ENCODE measurements at regions of chr14 and their contacts with region 1.

Region 1: GRCh38 chr14:68248481-68249255 is 429.1 kb downstream of the RAD51B start:
- DNase-seq: peak in 5 of 14 experiments; percentile 1 to 79 (median 69)
- ATAC-seq: peak; percentile 83
- H3K4me3 ChIP-seq: no peak overlapping the region
- H3K4me3 Mint-ChIP-seq: no peak overlapping the region
- H3K27ac ChIP-seq: no peak overlapping the region
- H3K27ac Mint-ChIP-seq: peak overlapping the region; percentile 67
- H3K4me1 ChIP-seq: peaks cover 6% of the 10 kb centered on the region
- H3K4me1 Mint-ChIP-seq: peaks cover 52% of the 10 kb centered on the region
- H3K27me3 ChIP-seq: no peaks in the 10 kb centered on the region
- H3K27me3 Mint-ChIP-seq: no peaks in the 10 kb centered on the region
- CTCF ChIP-seq: peak; percentile 77

Region 2: GRCh38 chr14:68261092-68261842 is 12.6 kb after region 1 on chr14:
- CTCF ChIA-PET with region 1: no interaction called
- POLR2A ChIA-PET with region 1: interaction called, 20 read pairs
- intact Hi-C with region 1: no loop called
- DNase-seq: peak in 4 of 14 experiments; percentile 19 to 23 (median 22)
- ATAC-seq: peak; percentile 55
- H3K4me3 ChIP-seq: no peak overlapping the region
- H3K4me3 Mint-ChIP-seq: peak overlapping the region; percentile 77
- H3K27ac ChIP-seq: peak overlapping the region; percentile 54 to 67
- H3K27ac Mint-ChIP-seq: peak overlapping the region; percentile 79
- H3K4me1 ChIP-seq: peaks cover 37% of the 10 kb centered on the region
- H3K4me1 Mint-ChIP-seq: peaks cover 70% of the 10 kb centered on the region
- H3K27me3 ChIP-seq: no peaks in the 10 kb centered on the region
- H3K27me3 Mint-ChIP-seq: no peaks in the 10 kb centered on the region
- CTCF ChIP-seq: no peak

Region 3: DNA sequence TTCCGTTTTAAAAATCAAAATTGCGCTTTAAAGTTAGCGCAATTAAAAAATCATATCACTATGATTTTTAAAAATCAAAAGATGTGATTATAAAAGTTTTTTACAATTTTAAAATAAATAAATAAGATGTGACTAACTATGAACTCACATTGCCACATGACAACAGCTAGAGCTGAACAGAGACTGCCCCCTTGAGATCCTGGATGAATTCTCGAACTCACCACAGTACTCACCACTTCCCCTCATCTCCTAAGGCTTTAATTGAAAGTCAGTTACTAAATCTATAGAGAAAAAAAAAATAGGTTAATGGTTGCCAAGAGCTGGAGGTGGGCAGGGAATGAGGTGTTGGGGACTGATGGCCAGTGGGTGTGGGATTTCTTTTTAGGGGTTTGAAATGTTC is 160.0 kb after region 1 on chr14:
- CTCF ChIA-PET with region 1: interaction called, 3 read pairs
- POLR2A ChIA-PET with region 1: interaction called, 4 read pairs
- intact Hi-C with region 1: loop called in 1 of 2 experiments (anchors 5 kb)
- DNase-seq: peak in 4 of 14 experiments; percentile 41 to 62 (median 60)
- ATAC-seq: peak; percentile 41
- H3K4me3 ChIP-seq: no peak overlapping the region
- H3K4me3 Mint-ChIP-seq: no peak overlapping the region
- H3K27ac ChIP-seq: no peak overlapping the region
- H3K27ac Mint-ChIP-seq: no peak overlapping the region
- H3K4me1 ChIP-seq: peaks cover 19% of the 10 kb centered on the region
- H3K4me1 Mint-ChIP-seq: peaks cover 42% of the 10 kb centered on the region
- H3K27me3 ChIP-seq: no peaks in the 10 kb centered on the region
- H3K27me3 Mint-ChIP-seq: no peaks in the 10 kb centered on the region
- CTCF ChIP-seq: peak; percentile 44

Region 4: GRCh38 chr14:68780358-68781160 is 531.9 kb after region 1 on chr14:
- CTCF ChIA-PET with region 1: no interaction called
- POLR2A ChIA-PET with region 1: interaction called, 157 read pairs
- intact Hi-C with region 1: no loop called
- DNase-seq: peak in 9 of 14 experiments; percentile 27 to 77 (median 44)
- ATAC-seq: peak; percentile 36
- H3K4me3 ChIP-seq: peak overlapping the region; percentile 44
- H3K4me3 Mint-ChIP-seq: peak overlapping the region; percentile 79
- H3K27ac ChIP-seq: peak overlapping the region; percentile 56 to 58
- H3K27ac Mint-ChIP-seq: peak overlapping the region; percentile 92
- H3K4me1 ChIP-seq: peaks cover 81% of the 10 kb centered on the region
- H3K4me1 Mint-ChIP-seq: peaks cover 79% of the 10 kb centered on the region
- H3K27me3 ChIP-seq: no peaks in the 10 kb centered on the region
- H3K27me3 Mint-ChIP-seq: no peaks in the 10 kb centered on the region
- CTCF ChIP-seq: no peak

Region 5: GRCh38 chr14:68816262-68816942 is 567.7 kb after region 1 on chr14:
- CTCF ChIA-PET with region 1: interaction called, 33 read pairs
- POLR2A ChIA-PET with region 1: interaction called, 85 read pairs
- intact Hi-C with region 1: loop called (anchors 1 kb)
- DNase-seq: peak; percentile 80 to 94 (median 88)
- ATAC-seq: peak; percentile 62
- H3K4me3 ChIP-seq: peak overlapping the region; percentile 64
- H3K4me3 Mint-ChIP-seq: peak overlapping the region; percentile 91
- H3K27ac ChIP-seq: peak overlapping the region; percentile 92 to 93
- H3K27ac Mint-ChIP-seq: peak overlapping the region; percentile 95
- H3K4me1 ChIP-seq: peaks cover 89% of the 10 kb centered on the region
- H3K4me1 Mint-ChIP-seq: peaks cover 79% of the 10 kb centered on the region
- H3K27me3 ChIP-seq: no peaks in the 10 kb centered on the region
- H3K27me3 Mint-ChIP-seq: no peaks in the 10 kb centered on the region
- CTCF ChIP-seq: peak; percentile 96